Activated naive CD8-positive, alpha-beta T cell treated with anti-CD3 and anti-CD28 coated beads, Interleukin-2, amount 10 ng/mL, durations not matched to agents 7 days and 5 days (primary cell): ENCODE measurements at regions of chr11 and their contacts with region 1.

Region 1: GRCh38 chr11:123357961-123358841 is 71.9 kb upstream of the GRAMD1B start:
- DNase-seq: peak; percentile 68
- ATAC-seq: peak; percentile 92
- H3K4me3 Mint-ChIP-seq: peak overlapping the region; percentile 100
- H3K27ac Mint-ChIP-seq: peak overlapping the region; percentile 94
- H3K4me1 Mint-ChIP-seq: peaks cover 46% of the 10 kb centered on the region
- H3K27me3 Mint-ChIP-seq: peaks cover 18% of the 10 kb centered on the region

Region 2: DNA sequence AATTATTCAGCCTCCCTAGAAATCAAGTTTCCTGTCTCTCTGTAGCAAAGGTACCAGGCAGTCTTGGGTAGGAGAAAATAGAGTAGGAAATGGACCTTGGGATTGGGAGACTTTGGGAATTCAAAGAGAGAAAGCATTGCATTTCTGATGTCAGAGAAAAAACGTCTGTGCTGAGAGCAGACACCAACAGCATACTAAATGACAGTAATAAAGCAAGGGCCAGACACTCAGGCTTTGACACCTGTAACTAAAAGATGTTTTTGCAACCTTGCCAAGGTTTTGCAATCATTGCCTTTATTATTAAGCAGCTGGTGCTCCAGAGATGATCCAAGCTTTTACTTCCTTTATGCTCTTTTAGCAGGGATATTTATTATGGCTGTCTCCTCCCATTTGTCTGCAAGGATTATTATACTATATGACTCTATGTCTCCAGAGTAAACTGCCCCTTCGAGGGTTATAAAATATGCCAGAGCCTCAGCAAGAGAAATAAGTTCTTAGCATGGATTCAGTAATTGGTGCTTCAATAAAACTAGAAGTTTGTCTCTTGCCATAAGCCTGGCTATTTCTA is 13.3 kb before region 1 on chr11:
- POLR2A ChIA-PET with region 1: no interaction called
- DNase-seq: no peak
- ATAC-seq: no peak
- H3K4me3 Mint-ChIP-seq: no peak overlapping the region
- H3K27ac Mint-ChIP-seq: no peak overlapping the region
- H3K4me1 Mint-ChIP-seq: no peaks in the 10 kb centered on the region
- H3K27me3 Mint-ChIP-seq: peaks cover 23% of the 10 kb centered on the region

Region 3: GRCh38 chr11:123381817-123382554 is 23.8 kb after region 1 on chr11:
- POLR2A ChIA-PET with region 1: interaction called, 10 read pairs
- DNase-seq: peak; percentile 49
- ATAC-seq: peak; percentile 97
- H3K4me3 Mint-ChIP-seq: peak overlapping the region; percentile 63
- H3K27ac Mint-ChIP-seq: peak overlapping the region; percentile 81
- H3K4me1 Mint-ChIP-seq: peaks cover 25% of the 10 kb centered on the region
- H3K27me3 Mint-ChIP-seq: no peaks in the 10 kb centered on the region

Region 4: GRCh38 chr11:123822032-123822431 is 463.8 kb after region 1 on chr11:
- POLR2A ChIA-PET with region 1: no interaction called
- DNase-seq: no peak
- ATAC-seq: no peak
- H3K4me3 Mint-ChIP-seq: no peak overlapping the region
- H3K27ac Mint-ChIP-seq: no peak overlapping the region
- H3K4me1 Mint-ChIP-seq: peaks cover 2% of the 10 kb centered on the region
- H3K27me3 Mint-ChIP-seq: peaks cover 11% of the 10 kb centered on the region